Activated T-helper 2 cell treated with anti-CD3 and anti-CD28 coated beads, Interferon-gamma antibody, Interleukin-2, Interleukin-4, amounts not matched to agents 10 μg/mL and 5 μg/mL and 100 μg/mL, durations not matched to agents 14 hours and 24 hours and 36 hours (primary cell): ENCODE measurements at regions of chr11 and their contacts with region 1.

Region 1: DNA sequence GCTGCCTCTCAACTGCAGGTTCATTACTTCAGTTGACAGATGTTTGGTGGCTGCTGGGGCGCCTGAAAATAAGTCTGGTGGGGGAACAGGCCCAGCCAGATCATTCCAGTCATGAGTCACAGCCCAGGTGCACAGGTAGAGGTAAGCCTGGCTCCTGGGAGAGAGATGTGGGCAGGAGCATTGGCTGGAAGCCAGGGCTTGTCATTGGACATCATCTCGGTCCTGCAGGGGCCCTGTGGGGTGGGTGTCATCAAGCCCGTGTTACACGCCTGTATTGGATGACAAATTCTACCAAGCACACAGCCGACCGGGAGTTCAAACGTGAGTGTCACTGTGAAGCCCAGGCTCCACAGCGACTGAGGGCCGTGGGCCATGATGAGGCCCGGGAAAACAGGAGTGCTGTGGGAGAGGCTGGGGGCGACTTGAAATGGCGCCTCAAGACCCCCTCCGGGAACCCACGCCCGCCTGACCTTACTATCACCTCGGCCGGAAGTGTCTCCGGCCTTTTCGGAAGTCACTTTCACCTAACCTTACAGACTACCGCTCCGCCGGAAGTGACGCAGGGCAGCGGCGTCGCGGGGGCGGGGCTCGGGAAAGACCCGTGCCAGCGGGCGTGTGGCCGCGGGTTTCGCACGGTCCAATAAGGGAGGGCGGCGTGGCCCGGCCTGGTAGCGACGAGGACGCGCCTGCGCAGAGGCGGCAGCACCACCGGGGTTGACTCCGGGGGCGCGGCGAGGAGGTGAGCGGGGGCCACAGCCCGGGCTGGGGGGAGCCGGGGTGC is at the start of gene FKBP2:
- DNase-seq: peak; percentile 98
- H3K4me3 Mint-ChIP-seq: peak within 1 kb of the TSS; percentile 94
- H3K27ac Mint-ChIP-seq: peak within 1 kb of the TSS; percentile 93
- H3K4me1 Mint-ChIP-seq: peaks cover 21% of the 10 kb centered on the region
- H3K27me3 Mint-ChIP-seq: no peaks in the 10 kb centered on the region
- total RNA-seq, gene FKBP2: 36.6 and 37.1 TPM in 2 replicates

Region 2: DNA sequence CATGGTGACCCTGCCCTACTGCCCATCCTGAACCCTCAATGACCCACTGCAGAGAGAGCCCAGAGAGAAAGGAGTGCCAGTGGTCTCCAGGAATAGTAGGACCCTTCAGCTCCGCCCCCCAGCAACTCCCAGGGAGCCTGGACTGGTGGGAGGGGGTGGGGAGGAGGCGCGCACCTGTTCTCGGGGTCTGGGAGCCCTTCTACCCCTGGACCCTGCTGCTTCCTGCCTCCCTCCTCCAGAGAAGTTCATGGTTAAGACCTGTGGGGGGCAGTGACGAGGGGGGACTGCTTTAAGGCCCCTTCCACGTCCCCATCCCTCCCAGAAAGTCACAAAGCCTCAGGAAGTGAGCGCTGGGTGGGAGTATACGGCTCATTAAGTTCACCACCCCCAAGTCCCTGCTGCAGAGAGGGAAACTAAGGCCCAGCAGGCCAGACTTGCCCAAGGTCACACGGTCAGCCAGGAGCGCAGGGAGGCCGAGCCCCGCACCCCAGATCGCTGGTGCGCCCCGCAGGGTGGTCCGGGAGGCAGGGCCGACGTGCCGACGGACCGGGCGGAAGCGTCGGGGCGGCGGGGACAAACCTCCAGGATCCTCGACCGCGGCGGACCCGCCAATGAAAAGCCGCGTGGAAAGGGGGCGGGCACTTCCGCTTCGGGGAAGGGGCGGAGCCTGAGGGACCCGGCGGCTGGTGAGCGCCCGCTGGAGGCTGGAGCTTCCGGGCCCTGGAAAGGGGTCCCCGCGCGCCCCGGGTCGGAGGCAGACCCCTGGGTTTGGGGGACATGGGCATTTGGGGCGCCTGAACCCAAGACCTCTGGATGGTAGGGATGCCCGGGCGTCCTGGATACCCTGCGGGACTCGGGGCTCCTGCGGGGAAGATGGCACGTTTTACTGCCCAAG is 14.7 kb before region 1 on chr11 and contains the starts of genes NUDT22 and TRPT1:
- intact Hi-C with region 1: loop called (anchors 1 kb)
- DNase-seq: peak; percentile 91
- H3K4me3 Mint-ChIP-seq: peak within 1 kb of the TSS; percentile 84
- H3K27ac Mint-ChIP-seq: peak within 1 kb of the TSS; percentile 62
- H3K4me1 Mint-ChIP-seq: peaks cover 21% of the 10 kb centered on the region
- H3K27me3 Mint-ChIP-seq: no peaks in the 10 kb centered on the region
- total RNA-seq, gene NUDT22: 72.8 and 77.0 TPM in 2 replicates
- total RNA-seq, gene TRPT1: 33.7 and 35.5 TPM in 2 replicates

Region 3: DNA sequence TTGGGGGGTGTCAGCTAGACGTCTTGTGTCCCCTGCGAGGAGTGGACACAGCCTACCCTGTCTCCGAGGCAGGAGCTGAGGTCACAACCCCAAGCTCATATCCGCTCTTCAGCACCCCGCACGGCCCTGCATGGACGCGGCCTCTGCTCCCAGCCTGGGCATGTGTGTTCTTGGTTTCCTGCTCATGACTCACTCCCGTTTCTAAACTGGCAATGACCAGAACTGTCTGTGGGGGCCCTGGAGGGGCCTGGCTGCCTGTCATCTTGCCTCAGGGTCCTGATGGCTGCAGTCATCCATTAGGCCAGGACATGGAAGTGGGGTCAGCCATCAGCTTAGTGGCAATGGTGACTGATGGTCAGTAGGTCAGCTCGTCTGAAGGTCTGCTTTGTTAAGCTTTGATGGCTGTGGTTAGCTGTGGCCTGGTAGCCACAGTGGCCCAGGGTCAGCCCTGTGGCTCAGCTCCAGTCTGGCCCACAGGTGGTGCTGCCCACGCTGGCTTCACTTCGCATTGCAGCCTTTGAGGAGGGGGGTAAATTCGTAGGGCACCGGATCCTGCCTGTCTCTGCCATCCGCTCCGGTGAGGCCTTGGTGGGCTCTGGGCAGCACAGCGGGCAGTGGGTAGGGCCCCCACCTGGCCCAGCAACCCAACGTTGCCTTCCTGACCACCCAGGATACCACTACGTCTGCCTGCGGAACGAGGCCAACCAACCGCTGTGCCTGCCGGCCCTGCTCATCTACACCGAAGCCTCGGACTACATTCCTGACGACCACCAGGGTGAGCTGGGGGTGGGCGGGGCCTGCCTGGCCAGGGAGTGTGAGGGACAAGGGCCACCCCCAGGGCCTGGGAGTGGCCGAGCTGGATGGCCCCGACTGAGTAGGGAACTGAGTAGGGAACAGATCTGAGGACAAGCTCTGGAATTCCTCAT is 22.7 kb after region 1 on chr11:
- intact Hi-C with region 1: no loop called
- DNase-seq: no peak
- H3K4me3 Mint-ChIP-seq: no peak overlapping the region
- H3K27ac Mint-ChIP-seq: no peak overlapping the region
- H3K4me1 Mint-ChIP-seq: peaks cover 10% of the 10 kb centered on the region
- H3K27me3 Mint-ChIP-seq: no peaks in the 10 kb centered on the region

Region 4: GRCh38 chr11:64284048-64284961 is 43.7 kb after region 1 on chr11 and contains the start of gene BAD:
- intact Hi-C with region 1: loop called (anchors 2 kb)
- DNase-seq: peak; percentile 88
- H3K4me3 Mint-ChIP-seq: peak within 1 kb of the TSS; percentile 85
- H3K27ac Mint-ChIP-seq: peak within 1 kb of the TSS; percentile 93
- H3K4me1 Mint-ChIP-seq: peaks cover 9% of the 10 kb centered on the region
- H3K27me3 Mint-ChIP-seq: no peaks in the 10 kb centered on the region
- total RNA-seq, gene BAD: 33.2 and 34.7 TPM in 2 replicates

Region 5: DNA sequence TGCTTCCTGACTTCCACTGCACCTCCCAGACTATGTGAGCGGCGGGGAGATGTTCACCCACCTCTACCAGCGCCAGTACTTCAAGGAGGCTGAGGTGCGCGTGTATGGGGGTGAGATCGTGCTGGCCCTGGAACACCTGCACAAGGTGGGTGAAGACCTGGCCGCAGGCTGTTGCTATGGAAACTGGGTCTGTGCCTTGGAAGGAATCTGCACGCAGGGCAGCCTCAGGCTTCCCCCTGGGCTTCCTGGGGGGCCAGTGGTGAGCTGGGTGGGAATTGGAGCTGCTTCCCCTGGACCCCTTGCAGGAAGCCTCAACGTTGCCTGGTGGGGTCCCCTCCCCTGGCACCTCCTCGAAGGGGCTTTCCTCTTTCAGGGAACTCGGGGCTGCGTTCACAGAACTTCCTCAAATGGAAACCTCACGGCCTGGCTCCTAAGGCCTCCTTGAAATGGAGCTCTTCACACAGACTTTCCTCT is 119.9 kb after region 1 on chr11:
- intact Hi-C with region 1: no loop called
- DNase-seq: no peak
- H3K4me3 Mint-ChIP-seq: peak overlapping the region; percentile 91
- H3K27ac Mint-ChIP-seq: no peak overlapping the region
- H3K4me1 Mint-ChIP-seq: peaks cover 21% of the 10 kb centered on the region
- H3K27me3 Mint-ChIP-seq: no peaks in the 10 kb centered on the region

Region 6: GRCh38 chr11:64448599-64449556 is 208.3 kb after region 1 on chr11:
- intact Hi-C with region 1: no loop called
- DNase-seq: peak; percentile 66
- H3K4me3 Mint-ChIP-seq: peak overlapping the region; percentile 68
- H3K27ac Mint-ChIP-seq: no peak overlapping the region
- H3K4me1 Mint-ChIP-seq: peaks cover 15% of the 10 kb centered on the region
- H3K27me3 Mint-ChIP-seq: peaks cover 21% of the 10 kb centered on the region